ENCODE measurements at regions of chr12 and their contacts with region 1.

Region 1: GRCh38 chr12:62603061-62603810 is 136.6 kb downstream of the MON2 start:
- DNase-seq: peak; percentile 83
- ATAC-seq: peak; percentile 78
- H3K4me3 Mint-ChIP-seq: peak overlapping the region; percentile 87
- H3K27ac Mint-ChIP-seq: peak overlapping the region; percentile 85; the same call in 1 of the 2 replicates
- H3K4me1 Mint-ChIP-seq: peaks cover 54% of the 10 kb centered on the region
- H3K27me3 Mint-ChIP-seq: no peaks in the 10 kb centered on the region
- CTCF ChIP-seq: no peak

Region 2: GRCh38 chr12:62793256-62794217 is 190.3 kb after region 1 on chr12:
- CTCF ChIA-PET with region 1: interaction called, 10 read pairs
- POLR2A ChIA-PET with region 1: interaction called, 11 read pairs
- DNase-seq: peak; percentile 86
- ATAC-seq: peak; percentile 59
- H3K4me3 Mint-ChIP-seq: no peak overlapping the region
- H3K27ac Mint-ChIP-seq: peak overlapping the region; percentile 11; the same call in 1 of the 2 replicates
- H3K4me1 Mint-ChIP-seq: peaks cover 33% of the 10 kb centered on the region
- H3K27me3 Mint-ChIP-seq: no peaks in the 10 kb centered on the region
- CTCF ChIP-seq: peak; percentile 90